AG04449 (cell line): ENCODE measurements at regions of chr11 and their contacts with region 1.

Region 1: GRCh38 chr11:103108933-103109817 is at the start of gene DYNC2H1:
- DNase-seq: peak; percentile 38
- H3K4me3 ChIP-seq: peak within 1 kb of the TSS; percentile 84
- CTCF ChIP-seq: peak; percentile 66

Region 2: GRCh38 chr11:102957953-102958352 is 151.2 kb before region 1 on chr11:
- CTCF ChIA-PET with region 1: no interaction called
- POLR2A ChIA-PET with region 1: no interaction called
- DNase-seq: no peak
- H3K4me3 ChIP-seq: no peak overlapping the region
- CTCF ChIP-seq: no peak

Region 3: GRCh38 chr11:103091801-103092524 is 17.2 kb before region 1 on chr11 and contains the start of gene DCUN1D5:
- CTCF ChIA-PET with region 1: interaction called, 50 read pairs
- POLR2A ChIA-PET with region 1: interaction called, 11 read pairs
- DNase-seq: peak; percentile 63
- H3K4me3 ChIP-seq: peak within 1 kb of the TSS; percentile 81
- CTCF ChIP-seq: no peak

Region 4: GRCh38 chr11:103097279-103097678 is 11.9 kb before region 1 on chr11:
- CTCF ChIA-PET with region 1: interaction called, 50 read pairs
- POLR2A ChIA-PET with region 1: interaction called, 11 read pairs
- DNase-seq: no peak
- H3K4me3 ChIP-seq: no peak overlapping the region
- CTCF ChIP-seq: no peak

Region 5: DNA sequence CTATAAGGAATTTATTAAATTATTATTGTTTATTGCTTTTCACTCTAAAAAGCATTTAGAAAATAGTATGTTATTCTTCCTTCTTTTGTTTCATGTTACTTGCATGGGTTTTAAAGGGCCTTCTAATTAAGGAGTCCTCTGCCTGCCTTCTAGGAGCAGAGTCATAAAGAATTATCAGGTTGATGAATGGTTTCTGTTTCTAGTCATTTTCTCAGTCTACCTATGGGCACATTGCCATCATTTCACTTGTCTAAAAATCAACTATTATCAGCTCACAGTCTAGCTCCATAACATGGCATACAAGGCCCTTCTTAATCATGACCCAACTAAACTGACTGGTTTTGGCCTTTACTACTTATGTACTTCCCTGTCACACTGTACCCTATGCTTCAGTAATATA is 16.3 kb after region 1 on chr11:
- CTCF ChIA-PET with region 1: interaction called, 12 read pairs
- POLR2A ChIA-PET with region 1: no interaction called
- DNase-seq: no peak
- H3K4me3 ChIP-seq: no peak overlapping the region
- CTCF ChIP-seq: no peak